Right cardiac atrium (tissue), 5 donors: ENCODE measurements at regions of chr2 and their contacts with region 1.

Region 1: GRCh38 chr2:68909793-68910674 is 38.8 kb upstream of the BMP10 start:
- DNase-seq: peak; percentile 70 to 88 (median 72)
- ATAC-seq: peak in 1 of 2 donors; percentile 71
- H3K4me3 ChIP-seq: no peak overlapping the region
- H3K27ac ChIP-seq: peak overlapping the region; percentile 76
- H3K4me1 ChIP-seq: peaks cover 7% of the 10 kb centered on the region
- H3K27me3 ChIP-seq: no peaks in the 10 kb centered on the region

Region 2: GRCh38 chr2:68467077-68467960 is 442.7 kb before region 1 on chr2 and contains the starts of genes APLF and FBXO48:
- intact Hi-C with region 1: loop called in 1 of 4 experiments (anchors 10 kb)
- DNase-seq: peak; percentile 97 to 99 (median 98)
- ATAC-seq: peak; percentile 99
- H3K4me3 ChIP-seq: peak within 1 kb of the TSS; percentile 89
- H3K27ac ChIP-seq: peak within 1 kb of the TSS; percentile 85
- H3K4me1 ChIP-seq: peaks cover 3% of the 10 kb centered on the region
- H3K27me3 ChIP-seq: no peaks in the 10 kb centered on the region
- total RNA-seq, gene APLF: 6.2 to 7.6 (median 6.7) TPM
- total RNA-seq, gene FBXO48: 0.42 to 1.1 (median 0.95) TPM

Region 3: DNA sequence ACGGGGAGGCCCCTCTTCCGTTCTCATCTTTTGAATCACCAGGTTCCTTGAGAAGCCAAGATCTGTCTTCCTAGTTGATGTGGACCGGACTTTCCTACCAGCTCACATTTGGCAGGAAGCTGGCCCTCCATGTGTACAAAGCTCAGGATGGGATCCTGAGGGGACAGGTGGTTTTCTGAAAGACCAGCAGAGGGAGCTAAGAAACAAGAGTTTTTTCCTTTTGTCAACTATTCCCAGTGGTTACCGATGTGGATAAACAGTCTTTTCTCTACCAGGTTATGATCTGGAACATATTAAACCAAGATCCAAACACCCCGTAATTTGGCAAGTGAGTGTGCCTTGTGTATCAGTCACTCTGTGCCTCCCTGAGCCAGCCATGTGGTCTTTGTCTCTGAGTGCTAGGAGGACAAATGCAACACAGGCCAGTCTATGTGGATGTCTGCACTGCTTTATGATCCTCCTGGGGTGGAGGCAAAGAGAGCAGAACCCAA is 200.6 kb before region 1 on chr2:
- intact Hi-C with region 1: loop called in 1 of 4 experiments (anchors 5 kb)
- DNase-seq: no peak
- ATAC-seq: peak; percentile 71 to 84
- H3K4me3 ChIP-seq: no peak overlapping the region
- H3K27ac ChIP-seq: no peak overlapping the region
- H3K4me1 ChIP-seq: no peaks in the 10 kb centered on the region
- H3K27me3 ChIP-seq: no peaks in the 10 kb centered on the region

Region 4: DNA sequence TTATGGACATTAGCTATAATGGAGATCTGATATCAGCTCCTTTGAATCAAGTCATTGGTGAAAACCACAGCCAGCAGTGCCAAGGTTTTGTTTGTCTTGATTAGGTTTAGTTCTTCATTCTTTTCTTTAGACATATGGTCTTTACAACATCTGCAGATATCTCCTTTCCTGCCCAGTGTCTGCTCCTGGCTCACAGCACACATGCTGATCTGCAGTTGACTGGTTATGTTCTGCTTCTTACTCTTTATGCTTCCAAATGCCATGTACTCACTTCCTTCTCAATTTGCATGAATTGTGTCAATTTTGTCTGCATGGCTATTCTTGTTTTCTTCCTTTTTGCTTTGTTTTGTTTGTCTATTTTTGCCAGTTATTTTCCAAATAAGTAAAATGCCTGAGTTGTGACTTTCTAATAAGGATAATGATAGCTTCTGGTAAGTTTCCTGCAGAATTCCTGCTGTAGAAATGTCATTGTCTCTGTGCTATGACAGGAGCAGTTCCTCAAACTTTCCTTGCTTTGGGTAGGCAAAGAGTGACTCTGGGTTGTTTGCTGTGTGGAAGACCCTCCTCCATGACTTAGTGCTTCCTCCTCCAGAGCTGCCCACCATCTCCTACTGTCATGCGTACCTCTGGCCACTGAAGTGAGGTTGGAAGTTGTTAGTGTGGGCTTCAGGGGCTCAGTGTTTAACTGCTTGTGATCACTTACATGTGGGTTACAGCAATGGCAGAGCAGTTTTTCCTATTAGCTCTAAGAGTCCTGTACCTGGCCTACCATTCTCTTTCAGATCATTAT is 167.2 kb before region 1 on chr2:
- intact Hi-C with region 1: loop called in 2 of 4 experiments (anchors 10 kb)
- DNase-seq: no peak
- ATAC-seq: no peak
- H3K4me3 ChIP-seq: no peak overlapping the region
- H3K27ac ChIP-seq: no peak overlapping the region
- H3K4me1 ChIP-seq: no peaks in the 10 kb centered on the region
- H3K27me3 ChIP-seq: no peaks in the 10 kb centered on the region